ENCODE measurements at regions of chr5 and their contacts with region 1.

Region 1: GRCh38 chr5:78984439-78985115 is 533 bp downstream of the ARSB start:
- DNase-seq: no peak
- ATAC-seq: peak; percentile 54
- H3K4me3 ChIP-seq: peak overlapping the region; percentile 94
- H3K27ac ChIP-seq: peak overlapping the region; percentile 90
- H3K4me1 ChIP-seq: peaks cover 15% of the 10 kb centered on the region; the same call in 1 of the 2 replicates
- H3K27me3 ChIP-seq: no peaks in the 10 kb centered on the region
- CTCF ChIP-seq: 0 out of 6 replicates have a peak, but pooled peaks of 2 of the 3 experiments have one; percentile 13 to 23
- EP300 ChIP-seq: 0 out of 4 replicates have a peak, but pooled peaks of 1 of the 2 experiments have one; percentile 32
- POLR2A ChIP-seq: peak; percentile 89
- RAD21 ChIP-seq: no peak

Region 2: DNA sequence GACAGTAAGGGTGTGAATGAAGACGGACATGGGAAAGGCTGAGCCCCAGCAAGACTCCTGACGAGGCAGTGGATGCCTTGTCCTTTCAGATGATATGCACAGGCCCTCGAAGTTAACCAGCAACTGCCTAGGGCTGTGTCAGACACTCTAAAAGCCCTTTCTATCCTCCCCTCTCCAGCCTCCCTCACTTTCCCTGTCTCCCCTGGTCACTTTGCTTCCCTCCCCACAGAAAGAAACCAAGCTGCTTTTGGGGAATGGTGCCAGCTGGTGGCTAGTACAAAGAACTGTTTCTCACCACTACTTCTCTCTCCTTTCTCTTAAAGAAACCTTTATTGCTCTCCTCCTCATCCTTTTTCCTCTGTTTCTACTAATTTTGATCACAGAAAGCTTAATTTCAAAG is 357.4 kb before region 1 on chr5:
- CTCF ChIA-PET with region 1: no interaction called
- POLR2A ChIA-PET with region 1: no interaction called
- RAD21 ChIA-PET with region 1: no interaction called
- SMC1A ChIA-PET with region 1: no interaction called
- in situ Hi-C with region 1: no loop called
- intact Hi-C with region 1: no loop called
- DNase-seq: no peak
- ATAC-seq: no peak
- H3K4me3 ChIP-seq: no peak overlapping the region
- H3K27ac ChIP-seq: no peak overlapping the region
- H3K4me1 ChIP-seq: no peaks in the 10 kb centered on the region
- H3K27me3 ChIP-seq: no peaks in the 10 kb centered on the region
- CTCF ChIP-seq: peak; percentile 25 to 33 (median 28); a peak in 3 of 6 replicates
- EP300 ChIP-seq: no peak
- POLR2A ChIP-seq: no peak
- RAD21 ChIP-seq: peak; percentile 56

Region 3: GRCh38 chr5:78845487-78845886 is 139.1 kb before region 1 on chr5:
- CTCF ChIA-PET with region 1: no interaction called
- POLR2A ChIA-PET with region 1: no interaction called
- RAD21 ChIA-PET with region 1: no interaction called
- SMC1A ChIA-PET with region 1: no interaction called
- in situ Hi-C with region 1: no loop called
- intact Hi-C with region 1: no loop called
- DNase-seq: no peak
- ATAC-seq: peak; percentile 91
- H3K4me3 ChIP-seq: no peak overlapping the region
- H3K27ac ChIP-seq: no peak overlapping the region
- H3K4me1 ChIP-seq: no peaks in the 10 kb centered on the region
- H3K27me3 ChIP-seq: no peaks in the 10 kb centered on the region
- CTCF ChIP-seq: no peak
- EP300 ChIP-seq: peak in 1 of 2 experiments; percentile 60; a peak in 1 of 4 replicates
- POLR2A ChIP-seq: no peak
- RAD21 ChIP-seq: no peak

Region 4: DNA sequence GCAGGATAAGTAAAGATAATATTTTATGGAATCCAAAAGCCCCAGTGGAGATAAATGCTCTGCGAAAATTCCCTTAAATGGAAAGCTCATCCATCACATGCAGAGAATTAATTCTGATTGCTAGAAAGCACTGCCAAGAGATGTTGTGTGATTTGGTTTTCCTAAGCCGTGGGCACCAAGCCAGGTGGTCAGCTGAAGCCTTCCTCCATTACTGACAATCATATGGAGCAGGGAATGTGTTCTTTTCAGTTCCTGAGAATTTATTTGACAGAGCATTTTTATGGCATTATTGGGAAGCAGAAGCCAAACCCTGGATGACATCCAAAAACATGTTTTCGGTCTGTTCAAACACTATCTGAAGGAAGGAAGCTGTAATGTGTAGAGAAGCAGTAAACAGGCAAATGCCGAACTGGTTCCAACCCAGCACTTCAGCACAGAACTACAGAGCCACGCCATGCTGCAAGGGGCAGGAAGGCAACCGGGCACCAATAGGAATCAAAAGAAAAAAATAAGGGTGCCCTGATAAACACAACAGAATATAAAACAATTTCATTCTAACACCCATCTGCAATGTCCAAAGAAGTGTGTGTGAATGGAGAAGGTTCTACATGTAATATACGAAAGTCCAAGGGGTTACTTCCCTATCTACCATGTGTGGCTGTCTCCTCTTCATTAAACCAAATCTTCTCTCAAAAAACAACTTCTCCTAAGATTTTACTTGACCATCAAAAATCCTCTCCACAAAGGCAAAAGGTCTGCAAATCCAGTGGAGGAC is 11.7 kb before region 1 on chr5:
- CTCF ChIA-PET with region 1: interaction called, 9 read pairs
- POLR2A ChIA-PET with region 1: no interaction called
- RAD21 ChIA-PET with region 1: interaction called, 10 read pairs
- SMC1A ChIA-PET with region 1: no interaction called
- in situ Hi-C with region 1: no loop called
- intact Hi-C with region 1: no loop called
- DNase-seq: no peak
- ATAC-seq: no peak
- H3K4me3 ChIP-seq: no peak overlapping the region
- H3K27ac ChIP-seq: no peak overlapping the region
- H3K4me1 ChIP-seq: peaks cover 4% of the 10 kb centered on the region; the same call in 1 of the 2 replicates
- H3K27me3 ChIP-seq: no peaks in the 10 kb centered on the region
- CTCF ChIP-seq: no peak
- EP300 ChIP-seq: no peak
- POLR2A ChIP-seq: no peak
- RAD21 ChIP-seq: no peak

Region 5: GRCh38 chr5:79122973-79123372 is 138.4 kb after region 1 on chr5:
- CTCF ChIA-PET with region 1: no interaction called
- POLR2A ChIA-PET with region 1: no interaction called
- RAD21 ChIA-PET with region 1: no interaction called
- SMC1A ChIA-PET with region 1: no interaction called
- in situ Hi-C with region 1: no loop called
- intact Hi-C with region 1: no loop called
- DNase-seq: no peak
- ATAC-seq: no peak
- H3K4me3 ChIP-seq: no peak overlapping the region
- H3K27ac ChIP-seq: no peak overlapping the region
- H3K4me1 ChIP-seq: no peaks in the 10 kb centered on the region
- H3K27me3 ChIP-seq: no peaks in the 10 kb centered on the region
- CTCF ChIP-seq: no peak
- EP300 ChIP-seq: no peak
- POLR2A ChIP-seq: no peak
- RAD21 ChIP-seq: no peak

Region 6: GRCh38 chr5:79235634-79236363 is 251.2 kb after region 1 on chr5 and contains the start of gene JMY:
- CTCF ChIA-PET with region 1: no interaction called
- POLR2A ChIA-PET with region 1: no interaction called
- RAD21 ChIA-PET with region 1: no interaction called
- SMC1A ChIA-PET with region 1: no interaction called
- in situ Hi-C with region 1: no loop called
- intact Hi-C with region 1: loop called (anchors 2 kb)
- DNase-seq: no peak
- ATAC-seq: peak; percentile 69
- H3K4me3 ChIP-seq: peak within 1 kb of the TSS; percentile 90
- H3K27ac ChIP-seq: peak within 1 kb of the TSS; percentile 89
- H3K4me1 ChIP-seq: peaks cover 5% of the 10 kb centered on the region
- H3K27me3 ChIP-seq: no peaks in the 10 kb centered on the region
- CTCF ChIP-seq: peak in 1 of 3 experiments; percentile 11; a peak in 2 of 6 replicates
- EP300 ChIP-seq: no peak
- POLR2A ChIP-seq: peak; percentile 90
- RAD21 ChIP-seq: no peak
- polyA plus RNA-seq, gene JMY: 0.63 to 0.80 TPM

Measured in GM12878 (cell line).